ENCODE measurements at regions of chr22 and their contacts with region 1.

Region 1: DNA sequence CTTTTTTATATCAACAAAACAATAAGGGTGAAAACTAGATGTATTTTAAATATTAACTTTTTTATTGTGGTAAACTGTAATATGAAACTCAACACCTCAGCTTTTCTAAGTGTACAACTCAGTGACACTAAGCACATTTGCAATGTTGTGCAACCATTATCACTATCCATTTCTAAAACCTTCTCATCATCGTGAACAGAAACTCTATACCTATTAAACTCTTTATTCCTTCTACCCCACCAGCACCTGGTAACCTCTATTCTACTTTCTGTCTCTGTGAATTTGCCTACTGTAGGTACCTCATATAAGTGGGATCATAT is 9.4 kb downstream of the HORMAD2 start:
- DNase-seq: no peak
- ATAC-seq: no peak
- H3K4me3 ChIP-seq: no peak overlapping the region
- H3K27ac ChIP-seq: no peak overlapping the region; the same call in 1 of the 2 replicates
- H3K4me1 ChIP-seq: no peaks in the 10 kb centered on the region
- H3K27me3 ChIP-seq: no peaks in the 10 kb centered on the region
- CTCF ChIP-seq: no peak
- POLR2A ChIP-seq: no peak
- RAD21 ChIP-seq: no peak

Region 2: GRCh38 chr22:29394931-29395581 is 694.6 kb before region 1 on chr22:
- CTCF ChIA-PET with region 1: no interaction called
- POLR2A ChIA-PET with region 1: no interaction called
- dilution Hi-C with region 1: no loop called
- in situ Hi-C with region 1: no loop called
- intact Hi-C with region 1: loop called (anchors 1 kb)
- DNase-seq: peak; percentile 72
- ATAC-seq: peak; percentile 100
- H3K4me3 ChIP-seq: no peak overlapping the region
- H3K27ac ChIP-seq: no peak overlapping the region
- H3K4me1 ChIP-seq: no peaks in the 10 kb centered on the region
- H3K27me3 ChIP-seq: peaks cover 11% of the 10 kb centered on the region
- CTCF ChIP-seq: peak; percentile 92
- POLR2A ChIP-seq: no peak
- RAD21 ChIP-seq: peak; percentile 91

Region 3: GRCh38 chr22:29587938-29588699 is 501.5 kb before region 1 on chr22:
- CTCF ChIA-PET with region 1: no interaction called
- POLR2A ChIA-PET with region 1: no interaction called
- dilution Hi-C with region 1: no loop called
- in situ Hi-C with region 1: no loop called
- intact Hi-C with region 1: loop called (anchors 1 kb)
- DNase-seq: peak; percentile 92
- ATAC-seq: peak; percentile 84
- H3K4me3 ChIP-seq: no peak overlapping the region
- H3K27ac ChIP-seq: no peak overlapping the region; the same call in 1 of the 2 replicates
- H3K4me1 ChIP-seq: peaks cover 3% of the 10 kb centered on the region; the same call in 1 of the 2 replicates
- H3K27me3 ChIP-seq: no peaks in the 10 kb centered on the region
- CTCF ChIP-seq: no peak
- POLR2A ChIP-seq: no peak
- RAD21 ChIP-seq: no peak

Region 4: GRCh38 chr22:29689880-29690213 is 399.8 kb before region 1 on chr22:
- CTCF ChIA-PET with region 1: interaction called, 5 read pairs
- POLR2A ChIA-PET with region 1: no interaction called
- dilution Hi-C with region 1: no loop called
- in situ Hi-C with region 1: no loop called
- intact Hi-C with region 1: loop called (anchors 1 kb)
- DNase-seq: peak; percentile 55
- ATAC-seq: peak; percentile 82
- H3K4me3 ChIP-seq: no peak overlapping the region
- H3K27ac ChIP-seq: no peak overlapping the region
- H3K4me1 ChIP-seq: 0 out of 2 replicates have a peak, but pooled peaks cover 2% of the 10 kb centered on the region
- H3K27me3 ChIP-seq: no peaks in the 10 kb centered on the region
- CTCF ChIP-seq: peak; percentile 74
- POLR2A ChIP-seq: no peak
- RAD21 ChIP-seq: peak; percentile 78

Region 5: GRCh38 chr22:29772170-29772641 is 317.4 kb before region 1 on chr22:
- CTCF ChIA-PET with region 1: interaction called, 4 read pairs
- POLR2A ChIA-PET with region 1: no interaction called
- dilution Hi-C with region 1: no loop called
- in situ Hi-C with region 1: no loop called
- intact Hi-C with region 1: loop called (anchors 1 kb)
- DNase-seq: peak; percentile 76
- ATAC-seq: peak; percentile 79
- H3K4me3 ChIP-seq: no peak overlapping the region
- H3K27ac ChIP-seq: no peak overlapping the region
- H3K4me1 ChIP-seq: peaks cover 10% of the 10 kb centered on the region; the same call in 1 of the 2 replicates
- H3K27me3 ChIP-seq: no peaks in the 10 kb centered on the region
- CTCF ChIP-seq: peak; percentile 61
- POLR2A ChIP-seq: no peak
- RAD21 ChIP-seq: peak; percentile 59

Measured in IMR-90 (cell line).